ENCODE measurements at regions of chr21 and their contacts with region 1.

Region 1: DNA sequence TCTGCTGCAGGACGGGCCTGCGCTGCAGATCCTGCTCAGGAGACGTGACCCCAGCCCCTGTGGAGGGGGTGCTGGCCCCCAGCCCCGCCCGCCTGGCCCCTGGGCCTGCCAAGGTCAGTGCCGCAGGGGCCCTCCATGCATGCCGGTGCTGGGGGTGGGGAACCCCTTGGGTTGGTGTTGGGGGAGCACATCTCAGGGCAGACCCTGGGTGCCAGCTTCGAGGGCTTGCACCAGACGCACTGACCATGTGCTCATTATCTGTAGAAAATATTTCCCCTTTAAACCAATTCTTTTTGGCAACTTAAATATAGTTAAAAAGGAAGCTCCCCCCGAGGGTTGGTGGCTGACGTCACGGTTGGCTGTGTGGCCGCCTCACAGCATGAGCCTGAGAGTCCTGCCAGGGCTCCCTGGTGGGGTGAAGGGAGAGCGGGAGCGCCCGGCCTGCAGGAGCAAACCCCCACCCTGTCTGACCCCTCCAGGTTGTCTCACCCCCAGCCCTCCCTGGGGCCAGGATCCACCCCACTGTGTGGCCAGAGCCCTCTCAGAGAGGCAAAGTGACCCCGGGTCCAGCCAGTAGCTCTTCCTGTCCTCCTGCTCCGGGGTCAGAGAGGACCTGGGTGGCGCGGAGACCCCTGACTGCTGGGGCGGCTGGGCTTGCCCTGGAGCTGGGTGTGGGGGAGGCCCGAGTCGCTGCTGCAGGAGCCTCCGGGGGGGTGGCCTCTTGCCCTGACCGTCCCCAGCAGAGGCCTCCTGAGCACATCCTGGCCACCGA is 5.3 kb upstream of the PFKL start:
- DNase-seq: peak in 1 of 9 donors; percentile 10
- ATAC-seq: no peak
- H3K4me3 ChIP-seq: no peak overlapping the region
- H3K4me3 Mint-ChIP-seq: peak overlapping the region in 4 of 10 donors; percentile 17 to 52 (median 43)
- H3K27ac ChIP-seq: peak overlapping the region; percentile 35
- H3K27ac Mint-ChIP-seq: peak overlapping the region in 2 of 9 donors; percentile 49 to 71
- H3K4me1 ChIP-seq: peaks cover 14 to 31% of the 10 kb centered on the region in 2 donors
- H3K4me1 Mint-ChIP-seq: peaks cover 11 to 36% (median 27%) of the 10 kb centered on the region in 7 donors
- H3K27me3 ChIP-seq: no peaks in the 10 kb centered on the region
- H3K27me3 Mint-ChIP-seq: no peaks in the 10 kb centered on the region

Region 2: DNA sequence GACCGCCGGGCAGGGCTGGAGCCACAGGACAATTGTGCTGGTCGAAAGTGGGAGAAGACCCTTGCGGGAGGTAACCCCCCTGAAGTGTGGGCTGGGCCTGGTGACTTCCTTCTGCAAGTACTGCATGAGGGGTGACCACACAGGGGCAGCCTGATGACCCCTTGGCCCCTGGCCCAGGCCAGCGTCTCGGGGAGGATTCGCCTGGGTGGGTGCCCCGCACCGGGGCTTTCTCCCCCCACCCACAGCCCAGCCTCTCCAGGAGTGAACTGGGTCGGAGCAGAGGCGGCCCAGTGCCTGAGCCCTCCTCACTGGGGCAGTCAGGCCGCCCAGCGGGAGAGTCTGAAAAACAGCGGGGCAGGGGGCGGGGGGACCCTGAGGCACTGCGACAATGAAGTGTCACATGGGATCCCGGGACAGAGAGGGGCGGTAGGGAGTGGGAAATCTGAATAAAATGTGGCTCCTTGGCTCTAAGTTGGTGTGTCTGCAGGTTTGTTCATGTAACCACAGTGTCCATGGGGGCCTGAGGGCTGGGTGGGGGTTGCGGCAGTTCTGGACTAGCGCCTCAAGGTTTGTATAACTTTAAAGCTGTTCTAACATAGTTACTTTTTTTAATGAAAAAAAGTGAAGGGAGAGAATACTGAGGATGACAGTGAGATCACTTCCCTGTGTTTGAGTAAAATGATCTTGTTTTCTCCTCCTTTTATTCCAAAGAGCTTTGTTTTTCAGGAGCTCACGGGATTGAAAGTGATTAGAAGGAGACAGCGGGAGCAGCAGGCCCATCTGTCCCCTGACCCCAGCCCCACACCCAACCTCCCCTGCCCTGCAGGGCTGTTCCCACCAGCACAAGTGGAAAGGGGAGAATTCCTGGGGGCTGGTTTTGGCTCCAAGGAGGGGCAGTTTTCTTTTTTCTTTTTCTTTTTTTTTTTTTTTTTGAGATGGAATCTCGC is 31.1 kb before region 1 on chr21:
- CTCF ChIA-PET with region 1: no interaction called
- POLR2A ChIA-PET with region 1: no interaction called
- intact Hi-C with region 1: no loop called
- DNase-seq: peak in 1 of 9 donors; percentile 4
- ATAC-seq: no peak
- H3K4me3 ChIP-seq: no peak overlapping the region
- H3K4me3 Mint-ChIP-seq: no peak overlapping the region
- H3K27ac ChIP-seq: no peak overlapping the region
- H3K27ac Mint-ChIP-seq: no peak overlapping the region
- H3K4me1 ChIP-seq: no peaks in the 10 kb centered on the region
- H3K4me1 Mint-ChIP-seq: peaks cover 0 to 3% (median 0%) of the 10 kb centered on the region in 7 donors
- H3K27me3 ChIP-seq: no peaks in the 10 kb centered on the region
- H3K27me3 Mint-ChIP-seq: peaks cover 0 to 7% (median 0%) of the 10 kb centered on the region in 5 donors

Region 3: GRCh38 chr21:44677881-44678280 is 383.3 kb after region 1 on chr21:
- CTCF ChIA-PET with region 1: no interaction called
- POLR2A ChIA-PET with region 1: no interaction called
- intact Hi-C with region 1: loop called in 1 of 2 experiments (anchors 5 kb)
- DNase-seq: no peak
- ATAC-seq: no peak
- H3K4me3 ChIP-seq: no peak overlapping the region
- H3K4me3 Mint-ChIP-seq: no peak overlapping the region
- H3K27ac ChIP-seq: no peak overlapping the region
- H3K27ac Mint-ChIP-seq: no peak overlapping the region
- H3K4me1 ChIP-seq: no peaks in the 10 kb centered on the region
- H3K4me1 Mint-ChIP-seq: peaks cover 0 to 3% (median 0%) of the 10 kb centered on the region in 7 donors
- H3K27me3 ChIP-seq: no peaks in the 10 kb centered on the region
- H3K27me3 Mint-ChIP-seq: peaks cover 0 to 47% (median 0%) of the 10 kb centered on the region in 5 donors

Region 4: GRCh38 chr21:44873356-44874239 is 579.0 kb after region 1 on chr21 and contains the start of gene PTTG1IP:
- CTCF ChIA-PET with region 1: no interaction called
- POLR2A ChIA-PET with region 1: no interaction called
- intact Hi-C with region 1: no loop called
- DNase-seq: peak; percentile 97 to 100 (median 99)
- ATAC-seq: peak; percentile 88
- H3K4me3 ChIP-seq: peak within 1 kb of the TSS; percentile 71
- H3K4me3 Mint-ChIP-seq: peak within 1 kb of the TSS; percentile 90 to 97 (median 96)
- H3K27ac ChIP-seq: peak within 1 kb of the TSS; percentile 81
- H3K27ac Mint-ChIP-seq: peak within 1 kb of the TSS; percentile 84 to 97 (median 92)
- H3K4me1 ChIP-seq: peaks cover 34 to 46% of the 10 kb centered on the region in 2 donors
- H3K4me1 Mint-ChIP-seq: peaks cover 31 to 56% (median 48%) of the 10 kb centered on the region in 7 donors
- H3K27me3 ChIP-seq: no peaks in the 10 kb centered on the region
- H3K27me3 Mint-ChIP-seq: no peaks in the 10 kb centered on the region
- total RNA-seq, gene PTTG1IP: 83.8 to 122 (median 95.6) TPM

Measured in naive thymus-derived CD4-positive, alpha-beta T cell (primary cell).